ENCODE measurements at regions of chr19 and their contacts with region 1.

Region 1: GRCh38 chr19:48501496-48502350 is 9.9 kb downstream of the LMTK3 start:
- DNase-seq: peak; percentile 82
- H3K4me3 Mint-ChIP-seq: peak overlapping the region; percentile 74
- H3K27ac Mint-ChIP-seq: peak overlapping the region; percentile 80
- H3K4me1 Mint-ChIP-seq: peaks cover 22% of the 10 kb centered on the region
- H3K27me3 Mint-ChIP-seq: peaks cover 7% of the 10 kb centered on the region

Region 2: DNA sequence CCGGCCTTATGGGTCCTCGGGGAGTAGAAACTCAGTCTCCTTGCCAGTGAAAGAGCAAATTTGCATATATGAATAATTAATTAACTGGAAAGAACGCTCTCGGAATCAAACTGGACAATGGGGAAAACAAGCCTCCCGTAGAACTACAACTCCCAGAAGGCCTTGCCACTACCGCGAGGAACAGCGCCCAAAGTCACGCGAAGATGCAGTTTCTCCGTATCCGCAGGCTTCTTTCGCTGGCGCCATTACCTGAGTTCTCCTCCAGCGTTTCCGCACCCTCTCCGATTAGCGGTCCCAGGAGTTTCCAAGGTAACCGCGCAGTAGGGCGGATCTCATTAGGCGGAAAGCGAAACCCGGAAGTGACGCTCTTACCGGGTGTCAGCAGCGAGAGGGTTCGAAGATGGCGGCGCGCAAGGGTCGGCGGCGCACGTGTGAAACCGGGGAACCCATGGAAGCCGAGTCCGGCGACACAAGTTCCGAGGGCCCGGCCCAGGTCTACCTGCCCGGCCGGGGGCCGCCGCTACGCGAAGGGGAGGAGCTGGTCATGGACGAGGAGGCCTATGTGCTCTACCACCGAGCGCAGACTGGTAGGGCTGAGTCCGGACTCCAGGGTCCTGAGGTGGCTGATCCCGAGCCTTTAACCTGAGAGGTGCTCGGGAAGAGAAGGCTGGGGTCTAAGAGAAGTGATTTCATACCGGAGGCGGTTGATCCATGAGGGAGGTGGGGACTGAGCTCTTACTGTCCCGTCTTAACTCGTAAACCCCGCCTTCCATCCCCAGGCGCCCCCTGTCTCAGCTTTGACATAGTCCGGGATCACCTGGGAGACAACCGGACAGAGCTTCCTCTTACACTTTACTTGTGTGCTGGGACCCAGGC is 55.9 kb before region 1 on chr19 and contains the start of gene GRWD1:
- CTCF ChIA-PET with region 1: no interaction called
- intact Hi-C with region 1: no loop called
- DNase-seq: peak; percentile 97
- H3K4me3 Mint-ChIP-seq: peak within 1 kb of the TSS; percentile 90
- H3K27ac Mint-ChIP-seq: peak within 1 kb of the TSS; percentile 84
- H3K4me1 Mint-ChIP-seq: peaks cover 35% of the 10 kb centered on the region
- H3K27me3 Mint-ChIP-seq: peaks cover 18% of the 10 kb centered on the region
- total RNA-seq, gene GRWD1: 32.4 to 36.0 TPM

Region 3: GRCh38 chr19:48487996-48488395 is 13.7 kb before region 1 on chr19:
- CTCF ChIA-PET with region 1: interaction called, 10 read pairs
- intact Hi-C with region 1: loop called (anchors 1 kb)
- DNase-seq: no peak
- H3K4me3 Mint-ChIP-seq: no peak overlapping the region
- H3K27ac Mint-ChIP-seq: no peak overlapping the region
- H3K4me1 Mint-ChIP-seq: peaks cover 23% of the 10 kb centered on the region
- H3K27me3 Mint-ChIP-seq: peaks cover 18% of the 10 kb centered on the region

Region 4: DNA sequence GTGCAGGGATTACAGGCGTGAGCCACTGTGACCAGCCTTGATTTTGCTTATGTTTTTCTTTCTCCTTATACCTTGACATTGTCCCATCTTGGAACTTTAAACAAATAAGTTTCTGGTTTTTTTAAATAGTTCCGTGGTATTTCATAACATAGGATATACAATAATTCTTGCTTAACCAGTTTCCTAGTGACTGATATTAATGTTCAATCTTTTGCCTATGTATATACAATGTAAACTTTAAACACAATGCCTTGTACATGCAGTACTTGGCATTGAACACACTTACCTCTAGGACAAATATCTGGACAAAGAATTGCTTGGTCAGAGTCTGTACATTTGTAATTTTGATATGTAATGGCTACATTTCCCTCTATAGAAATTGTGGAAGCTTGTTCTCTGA is 80.4 kb after region 1 on chr19:
- CTCF ChIA-PET with region 1: interaction called, 83 read pairs
- intact Hi-C with region 1: loop called (anchors 1 kb)
- DNase-seq: no peak
- H3K4me3 Mint-ChIP-seq: no peak overlapping the region
- H3K27ac Mint-ChIP-seq: no peak overlapping the region
- H3K4me1 Mint-ChIP-seq: peaks cover 3% of the 10 kb centered on the region
- H3K27me3 Mint-ChIP-seq: peaks cover 4% of the 10 kb centered on the region

Region 5: DNA sequence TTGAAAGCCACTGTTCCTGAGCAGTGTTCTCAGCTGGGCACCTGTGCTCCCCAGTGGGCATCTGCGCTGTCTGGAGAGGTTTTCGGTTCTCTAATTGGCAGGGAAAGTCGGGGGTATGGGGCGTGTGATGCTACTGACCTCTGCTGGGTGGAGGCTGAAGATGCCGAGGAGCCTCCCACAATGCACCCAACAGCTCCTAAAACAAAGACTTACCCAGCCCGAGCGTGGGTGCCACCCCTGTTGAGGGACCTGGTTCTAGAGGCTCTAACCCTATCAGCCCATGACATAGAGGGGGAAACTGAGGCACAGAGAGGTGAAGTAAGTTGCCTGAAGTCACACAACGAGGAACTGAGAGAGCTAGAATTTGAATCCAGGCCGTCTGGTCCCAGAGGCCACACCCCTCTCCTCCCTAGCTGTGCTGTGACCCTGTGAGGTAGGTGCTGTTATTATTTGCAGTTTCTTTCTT is 107.1 kb after region 1 on chr19:
- CTCF ChIA-PET with region 1: interaction called, 9 read pairs
- intact Hi-C with region 1: loop called (anchors 1 kb)
- DNase-seq: peak; percentile 64
- H3K4me3 Mint-ChIP-seq: no peak overlapping the region
- H3K27ac Mint-ChIP-seq: no peak overlapping the region
- H3K4me1 Mint-ChIP-seq: peaks cover 2% of the 10 kb centered on the region
- H3K27me3 Mint-ChIP-seq: no peaks in the 10 kb centered on the region

Region 6: DNA sequence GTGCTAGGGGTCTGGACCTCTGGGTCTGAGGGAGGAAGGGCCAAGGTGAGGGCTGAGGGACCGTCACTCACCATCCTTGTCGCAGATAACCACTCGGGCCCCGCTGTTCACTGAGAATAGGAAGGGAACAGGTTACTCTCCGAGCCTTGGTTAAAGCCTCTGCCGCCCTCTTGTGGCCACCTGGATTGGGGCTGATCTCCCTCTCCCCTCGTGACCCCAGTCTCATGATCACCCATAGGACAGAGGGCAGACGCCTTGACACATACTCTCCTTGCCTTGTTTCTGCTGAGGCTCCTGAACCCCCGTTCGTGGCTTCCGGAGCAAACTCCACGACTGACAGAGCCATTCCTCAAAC is 334.0 kb after region 1 on chr19:
- CTCF ChIA-PET with region 1: no interaction called
- intact Hi-C with region 1: loop called (anchors 5 kb)
- DNase-seq: peak; percentile 98
- H3K4me3 Mint-ChIP-seq: peak overlapping the region; percentile 73
- H3K27ac Mint-ChIP-seq: no peak overlapping the region
- H3K4me1 Mint-ChIP-seq: peaks cover 20% of the 10 kb centered on the region
- H3K27me3 Mint-ChIP-seq: peaks cover 2% of the 10 kb centered on the region